H1 (cell line): ENCODE measurements at regions of chr3 and their contacts with region 1.

Region 1: DNA sequence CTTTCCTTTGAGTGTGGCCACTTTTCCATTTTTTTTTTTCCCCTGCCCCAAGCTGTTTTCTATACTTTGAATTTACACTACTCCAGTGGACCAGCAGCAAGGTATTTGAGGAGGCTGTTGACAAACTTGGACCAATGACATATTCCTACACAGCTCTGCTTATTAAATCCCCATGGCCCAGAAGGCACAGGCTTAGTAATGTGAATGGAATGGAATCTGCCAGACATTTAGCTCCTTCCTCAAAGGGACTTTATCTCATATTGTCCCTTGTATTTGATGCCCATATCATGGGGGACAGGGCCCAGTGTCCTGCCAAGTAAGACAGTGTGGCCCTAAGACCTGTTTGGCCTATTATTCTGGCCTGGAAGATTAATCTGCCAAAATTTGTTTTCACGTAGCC is 107.5 kb downstream of the CHCHD6 start:
- DNase-seq: no peak
- H3K4me3 ChIP-seq: no peak overlapping the region
- H3K27ac ChIP-seq: no peak overlapping the region
- H3K4me1 ChIP-seq: peaks cover 0 to 9% (median 4%) of the 10 kb centered on the region in 4 experiments; a peak in 5 of 7 replicates
- H3K27me3 ChIP-seq: peaks cover 0 to 2% (median 0%) of the 10 kb centered on the region in 4 experiments; a peak in 1 of 7 replicates
- CTCF ChIP-seq: no peak
- EP300 ChIP-seq: no peak
- POLR2A ChIP-seq: no peak
- RAD21 ChIP-seq: no peak

Region 2: GRCh38 chr3:126487151-126487771 is 324.3 kb before region 1 on chr3:
- CTCF ChIA-PET with region 1: no interaction called
- POLR2A ChIA-PET with region 1: no interaction called
- DNase-seq: no peak
- H3K4me3 ChIP-seq: no peak overlapping the region
- H3K27ac ChIP-seq: no peak overlapping the region
- H3K4me1 ChIP-seq: peaks cover 0 to 22% (median 12%) of the 10 kb centered on the region in 4 experiments; a peak in 6 of 7 replicates
- H3K27me3 ChIP-seq: 0 out of 7 replicates have a peak, but pooled peaks cover 0 to 2% (median 0%) of the 10 kb centered on the region in 4 experiments
- CTCF ChIP-seq: peak in 2 of 3 experiments; percentile 53 to 59; a peak in 3 of 4 replicates
- EP300 ChIP-seq: no peak
- POLR2A ChIP-seq: no peak
- RAD21 ChIP-seq: peak in 1 of 2 experiments; percentile 49; a peak in 3 of 4 replicates

Region 3: DNA sequence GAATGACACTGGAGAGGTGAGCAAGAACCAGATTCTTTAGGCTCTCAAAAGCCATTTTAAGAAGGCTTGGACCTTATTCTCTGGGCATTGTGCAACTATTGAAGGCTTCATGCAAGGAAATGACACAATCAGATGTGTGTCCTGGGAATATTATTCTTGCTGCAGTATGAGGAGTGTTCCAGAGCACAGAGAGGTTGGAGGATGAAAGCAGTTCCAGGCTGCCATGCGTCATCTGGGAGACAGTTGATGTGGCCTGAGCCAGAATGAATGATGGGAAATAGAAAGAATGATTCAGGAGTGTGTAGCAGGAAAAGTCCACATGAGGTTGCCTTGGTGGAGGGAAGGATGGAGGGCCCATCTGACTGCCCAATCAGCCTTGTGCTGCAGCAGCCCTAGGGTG is 15.6 kb after region 1 on chr3:
- CTCF ChIA-PET with region 1: interaction called, 12 read pairs
- POLR2A ChIA-PET with region 1: interaction called, 6 read pairs
- DNase-seq: no peak
- H3K4me3 ChIP-seq: no peak overlapping the region
- H3K27ac ChIP-seq: no peak overlapping the region
- H3K4me1 ChIP-seq: no peaks in the 10 kb centered on the region
- H3K27me3 ChIP-seq: no peaks in the 10 kb centered on the region
- CTCF ChIP-seq: no peak
- EP300 ChIP-seq: no peak
- POLR2A ChIP-seq: no peak
- RAD21 ChIP-seq: no peak